Motor neuron (in vitro differentiated cells): ENCODE measurements at regions of chr18 and their contacts with region 1.

Region 1: GRCh38 chr18:11553098-11553940 is 56.1 kb upstream of the SLC35G4 start:
- ATAC-seq: peak; percentile 68 to 90 (median 81)
- H3K4me3 ChIP-seq: no peak overlapping the region
- H3K27ac ChIP-seq: no peak overlapping the region
- H3K4me1 ChIP-seq: no peaks in the 10 kb centered on the region

Region 2: GRCh38 chr18:10329101-10329500 is 1224.2 kb before region 1 on chr18:
- in situ Hi-C with region 1: no loop called
- ATAC-seq: peak in 1 of 8 experiments; percentile 29
- H3K4me3 ChIP-seq: no peak overlapping the region
- H3K27ac ChIP-seq: no peak overlapping the region
- H3K4me1 ChIP-seq: no peaks in the 10 kb centered on the region

Region 3: DNA sequence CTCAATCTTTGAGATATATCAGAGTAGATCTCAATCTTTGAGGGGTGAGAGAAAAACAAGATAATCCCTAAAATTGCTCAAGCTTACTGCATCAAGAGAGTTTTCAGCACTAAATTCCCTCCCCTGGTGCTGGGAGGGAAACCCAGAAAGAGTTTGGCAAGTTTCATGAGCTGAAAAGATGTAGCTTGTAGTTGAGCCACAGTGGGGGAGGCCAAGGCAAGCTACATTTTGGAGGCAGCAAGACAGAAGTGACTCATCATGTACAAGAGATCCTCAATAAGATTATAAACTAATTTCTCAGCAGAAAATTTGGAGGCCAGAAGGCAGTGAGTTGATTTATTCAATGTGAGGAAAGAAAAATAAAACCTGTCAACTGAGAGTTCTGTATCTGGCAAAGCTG is 712.1 kb before region 1 on chr18:
- in situ Hi-C with region 1: loop called in 1 of 9 experiments (anchors 25 kb)
- ATAC-seq: peak in 1 of 8 experiments; percentile 16
- H3K4me3 ChIP-seq: no peak overlapping the region
- H3K27ac ChIP-seq: no peak overlapping the region
- H3K4me1 ChIP-seq: no peaks in the 10 kb centered on the region

Region 4: DNA sequence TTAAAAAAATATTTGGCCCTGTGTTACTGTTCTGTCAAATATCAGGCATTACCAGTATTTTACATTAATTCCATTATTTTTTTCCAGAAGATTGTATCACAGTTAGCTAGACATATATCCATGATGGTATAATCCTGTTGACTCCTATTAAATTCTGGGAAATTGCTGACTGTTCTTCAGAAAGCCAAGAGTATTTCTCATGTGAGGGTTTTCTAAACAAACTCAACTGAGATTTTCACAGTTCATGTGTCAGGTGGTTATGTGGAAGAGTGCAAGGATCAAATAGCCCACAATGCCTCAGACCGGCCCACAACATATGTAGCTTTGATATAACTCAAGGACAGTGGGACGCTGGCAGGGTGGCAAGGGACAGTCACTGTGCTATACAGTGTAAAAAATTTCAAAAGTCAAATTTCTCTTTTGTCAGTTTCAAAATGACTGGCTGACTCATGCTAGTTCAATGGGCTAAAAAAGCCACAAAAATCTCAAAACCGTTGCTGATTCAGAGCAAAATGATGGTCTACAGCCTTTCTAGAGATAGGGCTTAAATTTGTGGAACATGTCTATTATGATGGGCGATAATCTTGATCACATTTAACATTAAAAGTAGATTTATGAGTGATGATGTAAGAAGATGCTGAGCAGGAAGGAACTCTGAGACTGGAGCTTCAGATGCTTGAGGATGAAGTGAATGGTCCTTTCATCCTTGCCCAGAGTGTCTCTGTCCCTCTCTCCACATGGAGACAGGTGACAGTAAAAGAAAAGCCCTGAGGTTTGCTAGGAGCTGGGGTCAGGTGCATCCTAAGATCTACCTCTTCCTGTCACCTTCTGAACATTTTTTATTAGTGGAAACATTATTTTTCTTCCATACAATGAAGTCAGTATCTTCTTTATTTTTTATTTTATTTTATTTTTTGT is 228.1 kb before region 1 on chr18:
- in situ Hi-C with region 1: loop called in 1 of 9 experiments (anchors 25 kb)
- ATAC-seq: peak in 1 of 8 experiments; percentile 11
- H3K4me3 ChIP-seq: no peak overlapping the region
- H3K27ac ChIP-seq: no peak overlapping the region
- H3K4me1 ChIP-seq: no peaks in the 10 kb centered on the region